ENCODE measurements at regions of chr1 and their contacts with region 1.

Region 1: DNA sequence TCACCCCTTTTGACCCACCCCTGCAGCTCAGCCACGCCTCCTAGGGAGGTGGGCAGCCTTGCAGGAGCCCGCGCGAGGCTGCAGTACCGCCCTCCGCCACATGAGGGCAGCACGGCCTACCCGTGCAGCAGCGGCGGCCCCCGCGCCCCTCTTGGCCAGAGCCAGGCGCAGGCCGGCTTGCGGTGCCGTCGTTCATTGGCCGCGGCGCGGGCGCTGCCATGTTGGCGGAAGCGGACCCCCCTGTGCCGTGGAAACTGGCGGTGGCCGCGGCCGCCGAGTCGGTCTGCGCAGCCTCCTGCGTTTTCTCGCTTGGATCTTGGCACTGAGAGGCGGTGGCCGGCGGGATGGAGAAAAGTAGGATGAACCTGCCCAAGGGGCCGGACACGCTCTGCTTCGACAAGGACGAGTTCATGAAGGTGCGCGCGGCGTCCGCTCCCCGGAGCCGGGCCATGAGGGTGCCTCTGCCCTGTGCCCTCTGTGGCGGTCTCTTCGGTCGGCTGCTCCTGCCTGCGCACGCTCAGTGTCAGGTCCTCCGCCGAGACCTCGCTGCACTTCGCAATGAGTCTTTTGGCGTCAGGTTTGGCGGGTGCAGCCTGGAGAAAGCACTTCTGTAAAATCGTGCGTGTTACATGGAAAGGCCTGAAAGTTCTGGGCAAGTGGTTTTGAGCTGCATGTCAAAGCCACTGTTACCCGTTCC is at the start of gene COG2:
- DNase-seq: peak; percentile 92 to 97 (median 96)
- ATAC-seq: peak; percentile 95 to 99 (median 98)
- H3K4me3 ChIP-seq: peak within 1 kb of the TSS; percentile 66 to 97 (median 92)
- H3K27ac ChIP-seq: peak within 1 kb of the TSS; percentile 65 to 92 (median 86)
- H3K4me1 ChIP-seq: peaks cover 10 to 47% (median 28%) of the 10 kb centered on the region in 12 donors
- H3K27me3 ChIP-seq: no peaks in the 10 kb centered on the region
- CTCF ChIP-seq: peak in 11 of 12 donors; percentile 99 to 100 (median 100)
- POLR2A ChIP-seq: peak in 1 of 2 donors; percentile 75
- total RNA-seq, gene COG2: 22.8 to 31.4 (median 25.3) TPM

Region 2: GRCh38 chr1:230681599-230681998 is 39.2 kb after region 1 on chr1:
- intact Hi-C with region 1: loop called in 1 of 10 experiments (anchors 5 kb)
- DNase-seq: no peak
- ATAC-seq: peak in 2 of 4 donors; percentile 73 to 78
- H3K4me3 ChIP-seq: no peak overlapping the region
- H3K27ac ChIP-seq: peak overlapping the region in 1 of 12 donors; percentile 0
- H3K4me1 ChIP-seq: peaks cover 0 to 23% (median 12%) of the 10 kb centered on the region in 12 donors
- H3K27me3 ChIP-seq: no peaks in the 10 kb centered on the region
- CTCF ChIP-seq: no peak
- POLR2A ChIP-seq: no peak

Region 3: GRCh38 chr1:230760360-230760827 is 118.0 kb after region 1 on chr1:
- intact Hi-C with region 1: loop called in 1 of 10 experiments (anchors 5 kb)
- DNase-seq: no peak
- ATAC-seq: peak in 3 of 4 donors; percentile 18 to 51 (median 42)
- H3K4me3 ChIP-seq: no peak overlapping the region
- H3K27ac ChIP-seq: no peak overlapping the region
- H3K4me1 ChIP-seq: peaks cover 0 to 9% (median 0%) of the 10 kb centered on the region in 12 donors
- H3K27me3 ChIP-seq: no peaks in the 10 kb centered on the region
- CTCF ChIP-seq: no peak
- POLR2A ChIP-seq: no peak

Region 4: GRCh38 chr1:231016234-231016633 is 373.8 kb after region 1 on chr1:
- intact Hi-C with region 1: no loop called
- DNase-seq: no peak
- ATAC-seq: no peak
- H3K4me3 ChIP-seq: no peak overlapping the region
- H3K27ac ChIP-seq: no peak overlapping the region
- H3K4me1 ChIP-seq: peaks cover 0 to 17% (median 5%) of the 10 kb centered on the region in 12 donors
- H3K27me3 ChIP-seq: no peaks in the 10 kb centered on the region
- CTCF ChIP-seq: no peak
- POLR2A ChIP-seq: no peak

Measured in heart left ventricle (tissue), 16 donors.